Posterior vena cava (tissue), 2 donors: ENCODE measurements at regions of chr4 and their contacts with region 1.

Region 1: DNA sequence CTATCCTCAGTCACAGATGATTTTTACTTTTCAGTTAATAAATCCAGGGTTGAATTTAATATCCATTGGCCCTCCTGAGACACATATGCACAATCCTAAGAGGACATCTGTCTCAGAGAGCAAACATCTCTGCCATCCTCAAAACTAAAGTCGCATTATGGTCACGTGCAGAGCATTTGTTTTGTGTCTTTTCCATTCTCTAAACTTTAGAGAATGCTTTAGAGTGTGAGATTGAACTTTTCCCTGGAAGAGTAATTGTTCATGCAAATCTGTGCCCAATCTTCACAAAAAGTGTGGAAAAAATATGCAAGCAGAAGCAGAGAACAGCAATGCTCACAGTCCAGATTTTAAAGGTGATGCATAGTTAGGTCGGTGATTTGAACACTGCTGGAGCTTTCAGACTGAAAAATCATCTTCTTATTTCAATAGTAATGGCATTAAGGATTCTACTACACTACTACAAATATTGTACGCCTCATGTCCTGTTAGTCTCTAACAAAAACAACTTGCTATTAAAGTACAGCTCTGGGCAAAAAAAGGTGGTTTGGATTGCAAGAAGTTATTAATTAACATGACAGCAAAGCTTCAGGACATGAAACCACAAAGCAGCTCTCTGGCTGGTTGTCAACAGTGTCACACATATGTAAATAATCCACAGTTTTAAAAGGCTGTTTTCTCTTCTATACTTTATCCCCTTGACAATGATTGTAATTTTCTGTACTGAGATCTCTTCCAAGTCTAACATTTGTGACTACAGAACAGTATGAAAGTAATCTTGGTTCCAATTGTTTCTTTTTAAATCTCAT is 19.9 kb downstream of the DCHS2 start:
- DNase-seq: no peak

Region 2: DNA sequence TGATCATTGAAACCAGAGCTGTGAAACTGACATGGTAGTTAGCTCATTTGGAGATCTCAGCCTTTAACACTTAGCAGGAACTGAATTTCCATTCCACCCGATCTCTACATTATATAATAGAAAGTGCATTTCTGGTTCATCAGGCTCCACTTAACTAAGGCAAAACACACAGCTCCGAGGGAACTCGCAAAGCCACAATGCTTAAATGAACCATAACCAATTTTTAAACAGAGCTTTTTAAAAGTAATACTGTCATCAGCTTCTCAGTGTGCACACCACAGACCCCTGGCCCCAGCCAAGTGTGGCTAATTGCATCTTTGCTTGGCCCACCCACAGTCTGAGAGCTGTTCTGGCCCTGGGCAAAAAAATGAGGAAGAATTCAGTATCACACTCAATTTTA is 46.2 kb before region 1 on chr4:
- intact Hi-C with region 1: loop called in 1 of 2 experiments (anchors 2 kb)
- DNase-seq: no peak

Region 3: DNA sequence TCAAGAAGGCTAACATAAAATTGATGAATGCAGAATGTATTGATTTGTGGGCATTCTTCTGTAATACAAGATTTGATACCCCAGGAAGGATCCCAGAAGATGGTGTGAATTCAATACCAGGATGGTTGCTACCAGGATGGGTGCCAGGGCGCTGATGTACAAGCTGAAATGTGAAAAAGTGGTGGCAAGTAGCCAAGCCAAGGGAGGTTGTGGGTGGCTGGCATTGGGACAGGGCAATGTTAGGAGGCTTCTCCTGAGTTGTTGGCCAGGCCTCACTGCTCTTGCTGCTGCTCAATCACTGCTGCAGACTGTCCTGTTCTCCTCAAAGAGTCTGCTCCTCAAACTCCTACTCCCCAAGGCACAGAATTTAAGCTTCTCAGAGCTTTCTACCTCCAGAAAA is 386.4 kb after region 1 on chr4:
- intact Hi-C with region 1: loop called in 1 of 2 experiments (anchors 5 kb)
- DNase-seq: no peak